Right ventricle myocardium superior (tissue), 1 donor: ENCODE measurements at regions of chr6 and their contacts with region 1.

Region 1: GRCh38 chr6:11064836-11065235 is 20.7 kb upstream of the ELOVL2 start:
- DNase-seq: no peak
- ATAC-seq: no peak

Region 2: DNA sequence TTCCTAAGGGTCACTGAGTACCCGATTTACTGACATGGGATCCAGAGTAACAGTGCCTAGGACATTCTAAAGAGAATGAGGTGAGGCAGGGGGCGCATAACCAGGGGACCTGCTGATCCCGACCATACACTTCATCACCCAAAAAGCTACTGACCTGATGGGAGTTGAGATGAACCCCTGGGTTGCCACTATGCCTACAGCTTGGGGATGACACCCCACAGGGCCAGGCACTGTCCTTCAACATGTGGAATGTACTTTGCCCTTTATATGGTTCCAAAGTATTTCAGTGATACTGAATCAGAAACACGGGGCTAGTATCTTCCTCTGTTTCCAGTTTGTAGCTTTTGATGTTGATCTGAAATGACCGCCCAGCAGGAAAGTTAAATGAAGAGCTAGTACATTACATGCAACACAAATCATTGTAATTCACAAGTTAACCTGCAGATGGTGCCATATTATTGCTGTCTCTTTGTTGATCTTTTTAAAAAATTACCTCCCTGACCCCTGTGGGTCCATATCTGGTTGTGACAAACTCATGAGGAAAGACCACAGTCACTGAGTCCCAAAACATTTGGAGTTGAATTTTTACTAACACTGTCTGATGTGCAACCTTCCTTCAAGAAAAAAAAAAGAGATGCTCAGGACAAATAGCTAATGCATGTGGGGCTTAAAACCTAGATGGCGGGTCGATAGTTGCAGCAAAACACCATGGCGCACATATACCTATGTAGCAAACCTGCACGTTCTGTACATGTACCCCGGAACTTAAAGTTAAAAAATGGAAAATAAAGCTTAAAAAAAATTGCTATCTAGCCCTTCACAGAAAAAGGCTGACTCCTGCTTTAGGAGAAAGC is 586.4 kb before region 1 on chr6:
- intact Hi-C with region 1: loop called (anchors 10 kb)
- DNase-seq: no peak
- ATAC-seq: peak; percentile 46

Region 3: DNA sequence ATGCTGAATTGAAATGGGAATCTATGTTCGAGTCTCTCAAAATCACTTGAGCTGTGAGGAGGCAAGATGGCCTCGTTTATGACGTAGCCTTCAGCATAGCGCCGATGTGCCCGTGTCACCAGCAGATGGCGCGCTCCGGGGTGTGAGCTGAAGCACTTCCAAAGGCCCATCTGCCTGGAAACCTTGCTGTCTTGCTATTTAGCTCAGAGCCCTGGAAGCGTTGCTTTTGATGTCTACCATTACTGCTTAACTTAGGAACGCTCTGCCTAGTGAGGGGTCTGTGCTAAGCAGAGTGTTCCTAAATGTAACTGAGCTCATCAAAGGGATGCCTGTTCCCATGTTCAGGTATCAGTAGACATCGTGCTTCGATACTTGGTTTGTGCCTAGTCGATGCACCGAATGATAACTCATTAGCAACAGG is 110.2 kb before region 1 on chr6:
- intact Hi-C with region 1: loop called (anchors 5 kb)
- DNase-seq: peak; percentile 82
- ATAC-seq: peak; percentile 71

Region 4: GRCh38 chr6:11251541-11252360 is 186.9 kb after region 1 on chr6:
- intact Hi-C with region 1: no loop called
- DNase-seq: peak; percentile 55
- ATAC-seq: peak; percentile 94